ENCODE measurements at regions of chr4 and their contacts with region 1.

Region 1: DNA sequence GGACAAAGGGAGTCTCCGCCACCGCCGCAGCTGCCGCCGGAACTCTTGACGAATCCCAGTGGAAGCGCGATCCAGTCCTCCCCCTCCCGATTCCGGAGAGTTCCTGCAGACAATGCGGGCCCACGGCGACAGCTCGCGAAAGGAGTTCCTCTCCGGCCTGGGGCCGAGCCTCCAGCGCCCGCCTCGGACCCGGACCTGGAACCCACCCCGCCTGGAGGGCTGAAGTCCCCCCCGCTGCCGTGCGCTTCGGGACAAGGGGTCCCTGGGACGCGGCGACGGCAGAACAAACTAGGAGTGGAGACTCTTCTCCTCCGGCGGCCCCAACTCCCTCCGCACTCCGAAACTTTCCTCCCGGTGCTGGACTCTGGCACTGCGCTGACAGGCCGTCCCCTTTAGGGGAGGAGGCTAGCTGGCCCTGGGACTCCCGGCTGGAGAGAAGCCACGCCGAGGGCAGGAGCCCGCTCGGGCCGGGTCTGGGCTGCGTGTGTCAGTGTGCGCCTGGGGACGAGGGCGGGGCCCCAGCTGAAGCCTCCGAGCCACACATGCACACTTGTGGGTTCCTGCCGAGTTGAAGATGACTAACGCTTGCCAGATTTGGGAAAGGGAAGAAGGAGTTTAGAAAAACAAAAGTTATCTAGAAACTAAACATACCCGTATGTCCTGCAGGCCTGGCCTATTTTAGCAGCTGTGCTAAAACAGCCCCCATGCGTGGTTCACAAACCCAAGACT is at the start of gene ANTXR2:
- DNase-seq: peak; percentile 90 to 95 (median 94)
- ATAC-seq: peak; percentile 92
- H3K4me3 ChIP-seq: peak within 1 kb of the TSS; percentile 69
- H3K4me1 ChIP-seq: peaks cover 8% of the 10 kb centered on the region
- CTCF ChIP-seq: no peak
- total RNA-seq, gene ANTXR2: 83.2 to 276 (median 120) TPM

Region 2: DNA sequence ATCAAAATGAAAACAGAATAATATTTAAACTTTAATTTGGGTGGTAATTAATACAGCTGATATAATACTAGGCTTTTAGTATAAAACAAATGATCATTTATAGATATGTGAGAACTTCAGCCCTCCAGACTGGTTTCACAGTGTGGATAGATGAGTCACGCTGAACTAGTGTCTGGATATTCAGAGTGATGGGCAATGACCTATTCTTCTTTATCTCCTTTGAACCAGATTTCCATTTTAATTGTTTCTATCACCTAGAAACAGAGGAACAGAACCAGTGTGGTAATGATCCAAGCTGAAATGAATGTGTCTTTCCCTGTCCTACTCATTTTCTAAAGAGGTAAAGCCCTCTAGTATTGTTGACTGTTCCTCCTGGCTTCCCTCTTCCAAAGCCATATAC is 509.7 kb before region 1 on chr4:
- intact Hi-C with region 1: no loop called
- DNase-seq: no peak
- ATAC-seq: no peak
- H3K4me3 ChIP-seq: no peak overlapping the region
- H3K4me1 ChIP-seq: no peaks in the 10 kb centered on the region
- CTCF ChIP-seq: no peak

Region 3: GRCh38 chr4:80184053-80184790 is 111.3 kb after region 1 on chr4:
- intact Hi-C with region 1: loop called in 1 of 2 experiments (anchors 10 kb)
- DNase-seq: peak; percentile 87 to 92 (median 91)
- ATAC-seq: peak; percentile 97
- H3K4me3 ChIP-seq: no peak overlapping the region
- H3K4me1 ChIP-seq: peaks cover 16% of the 10 kb centered on the region
- CTCF ChIP-seq: peak; percentile 89

Measured in mucosa of descending colon (tissue), 3 donors.